ENCODE measurements at regions of chr20 and their contacts with region 1.

Region 1: GRCh38 chr20:10673988-10674711 is at the start of gene JAG1:
- DNase-seq: peak; percentile 90
- H3K4me3 ChIP-seq: peak within 1 kb of the TSS; percentile 67
- H3K27ac ChIP-seq: peak within 1 kb of the TSS; percentile 51
- H3K4me1 ChIP-seq: peaks cover 40% of the 10 kb centered on the region
- CTCF ChIP-seq: no peak
- total RNA-seq, gene JAG1: 0.28 and 0.32 TPM in 2 replicates

Region 2: GRCh38 chr20:10034717-10035571 is 639.2 kb before region 1 on chr20 and contains the start of gene ANKEF1:
- CTCF ChIA-PET with region 1: no interaction called
- POLR2A ChIA-PET with region 1: no interaction called
- intact Hi-C with region 1: loop called (anchors 5 kb)
- DNase-seq: peak; percentile 86
- H3K4me3 ChIP-seq: peak within 1 kb of the TSS; percentile 78
- H3K27ac ChIP-seq: no peak within 1 kb of the TSS
- H3K4me1 ChIP-seq: no peaks in the 10 kb centered on the region
- CTCF ChIP-seq: no peak
- total RNA-seq, gene ANKEF1: 1.1 and 2.0 TPM in 2 replicates

Region 3: GRCh38 chr20:10434467-10434831 is 239.7 kb before region 1 on chr20:
- CTCF ChIA-PET with region 1: no interaction called
- POLR2A ChIA-PET with region 1: no interaction called
- intact Hi-C with region 1: loop called (anchors 2 kb)
- DNase-seq: peak; percentile 90
- H3K4me3 ChIP-seq: peak overlapping the region; percentile 94
- H3K27ac ChIP-seq: peak overlapping the region; percentile 81
- H3K4me1 ChIP-seq: peaks cover 40% of the 10 kb centered on the region
- CTCF ChIP-seq: 0 out of 2 replicates have a peak, but pooled peaks have one; percentile 3

Region 4: DNA sequence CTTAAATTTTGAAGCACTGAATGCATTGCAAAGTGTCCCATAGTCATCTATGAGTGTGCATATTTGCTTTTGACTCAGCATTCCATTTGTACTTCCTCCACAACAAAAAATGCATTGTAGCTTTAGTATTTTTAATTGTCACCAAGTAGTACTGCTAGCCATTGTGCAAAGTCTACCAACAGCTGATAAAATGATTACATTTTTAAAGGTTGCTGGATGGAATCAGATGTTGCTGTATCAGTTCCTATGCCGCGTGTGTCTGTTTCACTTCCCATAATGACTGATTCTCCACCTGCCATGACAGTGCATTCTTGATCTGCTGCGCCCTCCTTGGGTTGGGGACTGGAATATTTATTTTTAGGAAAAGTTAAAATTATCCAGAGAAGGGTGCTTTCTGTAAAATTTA is 197.8 kb before region 1 on chr20:
- CTCF ChIA-PET with region 1: no interaction called
- POLR2A ChIA-PET with region 1: interaction called, 5 read pairs
- intact Hi-C with region 1: loop called (anchors 5 kb)
- DNase-seq: peak; percentile 62
- H3K4me3 ChIP-seq: peak overlapping the region; percentile 10
- H3K27ac ChIP-seq: no peak overlapping the region
- H3K4me1 ChIP-seq: peaks cover 19% of the 10 kb centered on the region
- CTCF ChIP-seq: peak; percentile 70

Region 5: GRCh38 chr20:10553326-10553984 is 120.7 kb before region 1 on chr20:
- CTCF ChIA-PET with region 1: no interaction called
- POLR2A ChIA-PET with region 1: no interaction called
- intact Hi-C with region 1: loop called (anchors 5 kb)
- DNase-seq: peak; percentile 55
- H3K4me3 ChIP-seq: no peak overlapping the region
- H3K27ac ChIP-seq: no peak overlapping the region
- H3K4me1 ChIP-seq: no peaks in the 10 kb centered on the region
- CTCF ChIP-seq: peak; percentile 92

Measured in OCI-LY7 (cell line).